ENCODE measurements at regions of chr20 and their contacts with region 1.

Region 1: DNA sequence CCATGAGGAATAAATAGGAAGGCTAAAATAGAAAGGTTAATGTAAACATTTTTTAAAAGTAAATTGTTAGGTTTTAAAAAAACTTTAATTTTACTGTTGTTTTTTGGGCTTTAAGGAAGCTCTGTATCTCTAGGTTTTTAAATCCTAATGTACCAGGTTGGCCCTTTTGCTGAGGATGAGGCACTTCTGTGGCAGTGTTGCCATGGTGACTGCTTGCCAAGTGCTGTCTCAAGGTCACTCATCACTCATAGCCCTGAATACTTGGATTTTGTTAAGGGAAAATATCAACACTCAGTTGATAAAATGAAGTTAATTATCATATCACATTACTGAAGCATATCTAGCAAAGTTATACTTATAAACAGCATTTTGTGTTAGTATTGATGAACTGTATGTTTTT is 50.2 kb downstream of the NCOA3 start:
- DNase-seq: no peak
- ATAC-seq: no peak
- H3K4me3 ChIP-seq: no peak overlapping the region
- H3K4me3 Mint-ChIP-seq: no peak overlapping the region
- H3K27ac ChIP-seq: no peak overlapping the region
- H3K27ac Mint-ChIP-seq: peak overlapping the region; percentile 55
- H3K4me1 ChIP-seq: no peaks in the 10 kb centered on the region
- H3K4me1 Mint-ChIP-seq: peaks cover 48% of the 10 kb centered on the region
- H3K27me3 ChIP-seq: no peaks in the 10 kb centered on the region
- H3K27me3 Mint-ChIP-seq: no peaks in the 10 kb centered on the region
- CTCF ChIP-seq: no peak

Region 2: GRCh38 chr20:47400685-47401084 is 151.2 kb before region 1 on chr20:
- CTCF ChIA-PET with region 1: no interaction called
- POLR2A ChIA-PET with region 1: no interaction called
- intact Hi-C with region 1: no loop called
- DNase-seq: no peak
- ATAC-seq: no peak
- H3K4me3 ChIP-seq: no peak overlapping the region
- H3K4me3 Mint-ChIP-seq: no peak overlapping the region
- H3K27ac ChIP-seq: no peak overlapping the region
- H3K27ac Mint-ChIP-seq: no peak overlapping the region
- H3K4me1 ChIP-seq: no peaks in the 10 kb centered on the region
- H3K4me1 Mint-ChIP-seq: peaks cover 5% of the 10 kb centered on the region
- H3K27me3 ChIP-seq: no peaks in the 10 kb centered on the region
- H3K27me3 Mint-ChIP-seq: no peaks in the 10 kb centered on the region
- CTCF ChIP-seq: no peak

Region 3: GRCh38 chr20:47438577-47439381 is 113.1 kb before region 1 on chr20:
- CTCF ChIA-PET with region 1: no interaction called
- POLR2A ChIA-PET with region 1: no interaction called
- intact Hi-C with region 1: no loop called
- DNase-seq: peak in 2 of 9 experiments; percentile 8 to 43
- ATAC-seq: no peak
- H3K4me3 ChIP-seq: no peak overlapping the region
- H3K4me3 Mint-ChIP-seq: no peak overlapping the region
- H3K27ac ChIP-seq: no peak overlapping the region
- H3K27ac Mint-ChIP-seq: no peak overlapping the region
- H3K4me1 ChIP-seq: no peaks in the 10 kb centered on the region
- H3K4me1 Mint-ChIP-seq: peaks cover 3% of the 10 kb centered on the region
- H3K27me3 ChIP-seq: no peaks in the 10 kb centered on the region
- H3K27me3 Mint-ChIP-seq: no peaks in the 10 kb centered on the region
- CTCF ChIP-seq: no peak

Region 4: GRCh38 chr20:47535088-47535487 is 16.8 kb before region 1 on chr20:
- CTCF ChIA-PET with region 1: no interaction called
- POLR2A ChIA-PET with region 1: no interaction called
- intact Hi-C with region 1: loop called in 1 of 2 experiments (anchors 2 kb)
- DNase-seq: no peak
- ATAC-seq: no peak
- H3K4me3 ChIP-seq: no peak overlapping the region
- H3K4me3 Mint-ChIP-seq: no peak overlapping the region
- H3K27ac ChIP-seq: no peak overlapping the region
- H3K27ac Mint-ChIP-seq: no peak overlapping the region
- H3K4me1 ChIP-seq: peaks cover 25% of the 10 kb centered on the region
- H3K4me1 Mint-ChIP-seq: peaks cover 59% of the 10 kb centered on the region
- H3K27me3 ChIP-seq: no peaks in the 10 kb centered on the region
- H3K27me3 Mint-ChIP-seq: no peaks in the 10 kb centered on the region
- CTCF ChIP-seq: no peak